Activated CD8-positive, alpha-beta T cell treated with anti-CD3 and anti-CD28 coated beads, Interleukin-2, amount 10 ng/mL, durations not matched to agents 7 days and 5 days (primary cell): ENCODE measurements at regions of chr12 and their contacts with region 1.

Region 1: GRCh38 chr12:121494093-121494787 is 86.6 kb downstream of the KDM2B start:
- DNase-seq: peak; percentile 68
- ATAC-seq: no peak
- H3K4me3 Mint-ChIP-seq: no peak overlapping the region
- H3K27ac Mint-ChIP-seq: peak overlapping the region; percentile 62
- H3K4me1 Mint-ChIP-seq: peaks cover 56% of the 10 kb centered on the region
- H3K27me3 Mint-ChIP-seq: no peaks in the 10 kb centered on the region

Region 2: GRCh38 chr12:121476477-121476876 is 17.8 kb before region 1 on chr12:
- CTCF ChIA-PET with region 1: interaction called, 48 read pairs
- POLR2A ChIA-PET with region 1: interaction called, 3 read pairs
- DNase-seq: no peak
- ATAC-seq: no peak
- H3K4me3 Mint-ChIP-seq: no peak overlapping the region
- H3K27ac Mint-ChIP-seq: no peak overlapping the region
- H3K4me1 Mint-ChIP-seq: no peaks in the 10 kb centered on the region
- H3K27me3 Mint-ChIP-seq: no peaks in the 10 kb centered on the region